GM12878 (cell line): ENCODE measurements at regions of chr1 and their contacts with region 1.

Region 1: DNA sequence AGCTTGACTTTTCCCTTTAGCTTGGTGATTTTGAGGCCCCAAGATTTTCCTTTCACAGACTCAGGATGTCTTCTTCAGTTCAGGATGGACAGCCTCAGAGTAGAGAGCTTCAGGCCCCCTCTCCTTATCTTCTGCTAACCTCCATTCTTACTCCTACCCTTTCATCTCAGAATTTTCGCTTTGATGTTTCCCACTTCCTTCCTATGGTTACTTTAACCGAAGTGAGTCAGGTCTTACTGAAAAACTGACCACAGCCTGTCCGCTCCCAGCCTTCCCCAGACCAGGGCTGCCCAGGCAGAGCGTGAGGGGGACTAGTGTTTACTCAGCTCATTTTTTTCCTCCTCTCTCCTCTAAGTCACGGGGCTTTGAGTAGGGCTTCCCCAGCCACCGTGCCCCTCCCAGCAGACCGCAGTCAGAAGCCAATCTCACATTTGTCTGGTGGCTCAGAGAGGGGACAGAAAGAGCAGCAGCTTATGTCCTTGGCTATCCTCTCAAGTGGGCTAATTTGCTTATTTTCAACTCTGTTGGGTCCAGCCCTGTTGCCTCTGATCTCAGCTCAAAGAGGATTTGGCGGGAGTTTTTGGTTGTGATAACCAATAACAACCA is 4.2 kb upstream of the IL19 start:
- DNase-seq: peak; percentile 82
- ATAC-seq: peak; percentile 72
- H3K4me3 ChIP-seq: no peak overlapping the region
- H3K27ac ChIP-seq: peak overlapping the region; percentile 28
- H3K4me1 ChIP-seq: peaks cover 48% of the 10 kb centered on the region
- H3K27me3 ChIP-seq: no peaks in the 10 kb centered on the region
- CTCF ChIP-seq: no peak
- EP300 ChIP-seq: peak; percentile 45 to 55; a peak in 2 of 4 replicates
- POLR2A ChIP-seq: no peak
- RAD21 ChIP-seq: no peak

Region 2: GRCh38 chr1:206066479-206067171 is 699.7 kb before region 1 on chr1:
- CTCF ChIA-PET with region 1: no interaction called
- POLR2A ChIA-PET with region 1: no interaction called
- RAD21 ChIA-PET with region 1: no interaction called
- SMC1A ChIA-PET with region 1: no interaction called
- in situ Hi-C with region 1: no loop called
- intact Hi-C with region 1: no loop called
- DNase-seq: no peak
- ATAC-seq: peak; percentile 93
- H3K4me3 ChIP-seq: no peak overlapping the region
- H3K27ac ChIP-seq: no peak overlapping the region
- H3K4me1 ChIP-seq: peaks cover 26% of the 10 kb centered on the region
- H3K27me3 ChIP-seq: no peaks in the 10 kb centered on the region
- CTCF ChIP-seq: no peak
- EP300 ChIP-seq: no peak
- POLR2A ChIP-seq: no peak
- RAD21 ChIP-seq: no peak

Region 3: DNA sequence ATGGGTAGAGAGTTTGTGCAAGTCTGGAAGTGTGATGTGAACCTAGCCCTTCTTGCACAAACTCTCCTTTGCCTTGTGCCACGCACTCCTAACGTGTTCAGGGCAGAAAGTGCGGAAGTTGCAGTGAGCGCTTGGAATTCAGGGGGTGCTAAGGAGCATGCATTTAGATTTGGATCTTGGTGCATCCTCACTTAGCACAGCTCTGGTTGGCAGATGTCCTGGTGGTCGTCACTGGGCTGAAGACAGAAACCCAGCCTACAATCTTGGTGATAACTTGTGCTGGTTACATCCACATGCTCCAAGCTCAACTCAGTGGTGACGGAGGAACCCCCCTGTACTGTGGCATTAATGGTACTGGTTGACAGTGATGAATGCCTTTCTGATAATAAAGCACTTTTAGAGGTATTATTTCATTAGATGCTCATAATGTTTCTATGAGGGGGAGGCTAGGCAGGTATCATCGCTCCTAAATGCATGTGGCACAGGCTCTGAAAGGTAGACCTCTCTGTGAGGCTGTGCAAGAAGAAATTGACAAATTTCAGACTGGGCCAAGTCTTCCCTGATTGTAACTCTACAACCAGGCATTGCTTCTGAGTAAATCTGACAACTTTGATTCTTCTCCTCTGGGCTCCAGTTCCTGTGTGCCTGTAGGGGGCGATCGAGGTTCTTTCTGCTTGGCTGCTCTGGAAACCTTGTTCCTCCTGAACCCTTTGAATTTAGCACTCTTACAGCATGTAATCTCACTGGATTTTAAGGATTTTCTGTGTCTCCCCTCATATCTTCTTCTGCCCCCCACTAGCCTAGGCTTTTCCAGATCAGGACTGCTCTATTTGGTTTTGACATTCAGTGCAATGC is 41.0 kb before region 1 on chr1:
- CTCF ChIA-PET with region 1: interaction called, 23 read pairs
- POLR2A ChIA-PET with region 1: no interaction called
- RAD21 ChIA-PET with region 1: interaction called, 6 read pairs
- SMC1A ChIA-PET with region 1: interaction called, 5 read pairs
- in situ Hi-C with region 1: no loop called
- intact Hi-C with region 1: no loop called
- DNase-seq: no peak
- ATAC-seq: peak; percentile 84
- H3K4me3 ChIP-seq: no peak overlapping the region
- H3K27ac ChIP-seq: 0 out of 2 replicates have a peak overlapping the region, but pooled peaks have one; percentile 34
- H3K4me1 ChIP-seq: peaks cover 29% of the 10 kb centered on the region
- H3K27me3 ChIP-seq: no peaks in the 10 kb centered on the region
- CTCF ChIP-seq: peak; percentile 59 to 78 (median 73)
- EP300 ChIP-seq: no peak
- POLR2A ChIP-seq: no peak
- RAD21 ChIP-seq: peak; percentile 53

Region 4: DNA sequence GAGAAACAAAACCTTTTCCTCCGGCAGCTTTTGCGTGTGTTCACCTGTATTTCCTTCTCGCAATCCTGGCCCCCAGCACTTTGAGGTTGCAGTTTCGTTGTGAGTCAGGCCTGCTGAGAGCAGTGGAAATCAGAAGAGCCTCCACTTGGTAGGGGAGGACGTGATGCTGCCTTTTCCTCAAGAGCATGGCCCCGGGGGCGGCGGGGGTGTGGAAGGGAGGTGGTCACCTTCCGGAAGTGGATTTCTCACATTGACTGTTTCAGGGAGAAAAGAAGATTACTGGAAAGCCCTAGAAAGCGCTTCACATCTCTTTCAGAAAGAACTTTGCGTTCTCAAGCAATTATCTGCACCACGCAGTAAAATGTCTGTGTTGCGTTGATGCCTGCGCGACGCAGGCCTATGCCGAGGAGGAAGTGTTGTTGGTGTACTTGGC is 18.1 kb after region 1 on chr1:
- CTCF ChIA-PET with region 1: interaction called, 221 read pairs
- POLR2A ChIA-PET with region 1: interaction called, 283 read pairs
- RAD21 ChIA-PET with region 1: interaction called, 363 read pairs
- SMC1A ChIA-PET with region 1: interaction called, 410 read pairs
- in situ Hi-C with region 1: no loop called
- intact Hi-C with region 1: loop called (anchors 1 kb)
- DNase-seq: no peak
- ATAC-seq: peak; percentile 81
- H3K4me3 ChIP-seq: peak overlapping the region; percentile 38; the same call in 1 of the 2 replicates
- H3K27ac ChIP-seq: peak overlapping the region; percentile 85
- H3K4me1 ChIP-seq: peaks cover 49% of the 10 kb centered on the region
- H3K27me3 ChIP-seq: no peaks in the 10 kb centered on the region
- CTCF ChIP-seq: no peak
- EP300 ChIP-seq: peak; percentile 69 to 89; a peak in 3 of 4 replicates
- POLR2A ChIP-seq: peak; percentile 55
- RAD21 ChIP-seq: peak; percentile 19; the same call in 1 of the 2 replicates

Region 5: GRCh38 chr1:206803221-206803730 is 36.9 kb after region 1 on chr1:
- CTCF ChIA-PET with region 1: interaction called, 299 read pairs
- POLR2A ChIA-PET with region 1: interaction called, 41 read pairs
- RAD21 ChIA-PET with region 1: interaction called, 225 read pairs
- SMC1A ChIA-PET with region 1: interaction called, 319 read pairs
- in situ Hi-C with region 1: no loop called
- intact Hi-C with region 1: loop called (anchors 1 kb)
- DNase-seq: peak; percentile 98
- ATAC-seq: peak; percentile 97
- H3K4me3 ChIP-seq: no peak overlapping the region
- H3K27ac ChIP-seq: peak overlapping the region; percentile 55
- H3K4me1 ChIP-seq: peaks cover 20% of the 10 kb centered on the region
- H3K27me3 ChIP-seq: no peaks in the 10 kb centered on the region
- CTCF ChIP-seq: no peak
- EP300 ChIP-seq: peak; percentile 98 to 99
- POLR2A ChIP-seq: peak; percentile 26; the same call in 1 of the 2 replicates
- RAD21 ChIP-seq: peak; percentile 9; the same call in 1 of the 2 replicates

Region 6: GRCh38 chr1:206842854-206843253 is 76.5 kb after region 1 on chr1:
- CTCF ChIA-PET with region 1: no interaction called
- POLR2A ChIA-PET with region 1: no interaction called
- RAD21 ChIA-PET with region 1: no interaction called
- SMC1A ChIA-PET with region 1: no interaction called
- in situ Hi-C with region 1: no loop called
- intact Hi-C with region 1: no loop called
- DNase-seq: no peak
- ATAC-seq: no peak
- H3K4me3 ChIP-seq: no peak overlapping the region
- H3K27ac ChIP-seq: no peak overlapping the region
- H3K4me1 ChIP-seq: no peaks in the 10 kb centered on the region
- H3K27me3 ChIP-seq: no peaks in the 10 kb centered on the region; a peak in 1 of 4 replicates
- CTCF ChIP-seq: no peak
- EP300 ChIP-seq: no peak
- POLR2A ChIP-seq: no peak
- RAD21 ChIP-seq: no peak